Mammary epithelial cell (primary cell): ENCODE measurements at regions of chrX and their contacts with region 1.

Region 1: DNA sequence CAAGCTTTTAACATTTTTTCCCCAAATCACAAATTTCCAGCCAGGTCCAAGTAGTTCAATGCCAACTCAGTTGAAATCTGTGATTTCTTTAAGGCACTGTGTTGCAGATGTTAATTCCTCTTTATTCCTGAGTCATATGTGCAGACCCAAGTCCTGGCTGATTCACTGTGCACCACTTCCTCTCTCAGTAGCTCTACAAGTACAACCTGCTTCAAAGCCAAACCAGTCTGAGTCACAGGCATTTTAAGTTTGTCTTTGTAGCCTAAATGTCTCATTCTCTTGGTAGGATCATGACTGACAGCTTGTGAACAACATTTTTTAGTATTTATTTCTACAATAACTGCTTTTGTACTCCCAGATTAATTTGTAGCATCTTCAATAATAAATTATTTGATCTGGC is 165.6 kb upstream of the S100G start:
- DNase-seq: peak; percentile 96
- H3K4me3 ChIP-seq: no peak overlapping the region
- H3K27ac ChIP-seq: no peak overlapping the region
- H3K4me1 ChIP-seq: peaks cover 40% of the 10 kb centered on the region
- H3K27me3 ChIP-seq: no peaks in the 10 kb centered on the region
- CTCF ChIP-seq: no peak

Region 2: DNA sequence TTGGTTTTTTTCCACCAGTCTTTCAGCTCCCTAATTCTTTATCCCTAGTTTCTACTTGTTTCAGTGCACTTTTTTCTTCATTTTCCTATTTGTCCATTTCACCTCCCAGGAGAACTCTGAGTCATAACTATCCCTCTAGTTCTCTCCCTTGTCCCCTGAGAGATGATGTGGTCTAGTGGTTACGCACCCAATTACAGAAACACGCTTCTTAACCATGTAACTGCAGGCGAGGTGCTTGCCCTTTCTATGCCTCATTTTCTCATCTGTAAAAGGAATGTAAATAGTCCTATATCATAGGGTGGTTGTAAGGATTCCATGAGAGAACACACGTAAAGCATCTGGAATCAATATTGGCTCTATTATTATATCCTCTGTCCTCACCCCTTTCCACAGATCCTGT is 369.7 kb before region 1 on chrX:
- CTCF ChIA-PET with region 1: no interaction called
- dilution Hi-C with region 1: no loop called
- in situ Hi-C with region 1: no loop called
- intact Hi-C with region 1: no loop called
- DNase-seq: no peak
- H3K4me3 ChIP-seq: no peak overlapping the region
- H3K27ac ChIP-seq: no peak overlapping the region
- H3K4me1 ChIP-seq: no peaks in the 10 kb centered on the region
- H3K27me3 ChIP-seq: peaks cover 4% of the 10 kb centered on the region
- CTCF ChIP-seq: no peak

Region 3: DNA sequence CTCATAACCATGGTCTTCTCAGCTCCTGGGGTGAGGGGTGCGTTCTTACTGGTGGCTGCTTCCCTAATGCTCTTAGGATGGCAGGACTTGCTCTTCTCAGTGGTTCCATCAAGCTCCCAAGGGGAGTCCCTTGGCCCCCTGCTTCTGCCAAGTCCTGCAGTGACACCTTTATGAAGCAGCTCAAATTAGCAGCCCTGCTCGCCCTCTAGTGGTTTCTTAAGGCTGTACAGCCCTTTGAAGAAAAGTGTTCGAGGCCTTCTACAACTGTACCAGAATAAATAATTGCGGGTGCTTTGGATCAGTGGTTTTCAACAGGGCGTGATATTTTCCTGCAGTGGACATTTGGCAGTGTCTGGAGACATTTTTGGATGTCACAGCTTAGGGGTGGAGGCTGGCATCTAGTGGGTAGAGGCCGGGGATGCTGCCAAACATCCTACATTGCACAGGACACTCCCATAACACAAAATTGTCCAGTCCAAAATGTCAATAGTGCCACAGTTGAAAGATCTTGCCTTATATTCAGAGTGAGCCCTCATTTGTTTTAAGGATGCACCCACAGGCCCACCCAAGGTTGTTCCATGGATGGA is 39.1 kb before region 1 on chrX:
- CTCF ChIA-PET with region 1: no interaction called
- dilution Hi-C with region 1: no loop called
- in situ Hi-C with region 1: no loop called
- intact Hi-C with region 1: loop called (anchors 2 kb)
- DNase-seq: peak; percentile 20
- H3K4me3 ChIP-seq: no peak overlapping the region
- H3K27ac ChIP-seq: no peak overlapping the region
- H3K4me1 ChIP-seq: peaks cover 5% of the 10 kb centered on the region
- H3K27me3 ChIP-seq: no peaks in the 10 kb centered on the region
- CTCF ChIP-seq: peak; percentile 82 to 87

Region 4: GRCh38 chrX:16552546-16552945 is 68.2 kb after region 1 on chrX:
- CTCF ChIA-PET with region 1: no interaction called
- dilution Hi-C with region 1: no loop called
- in situ Hi-C with region 1: no loop called
- intact Hi-C with region 1: loop called (anchors 1 kb)
- DNase-seq: peak; percentile 89
- H3K4me3 ChIP-seq: no peak overlapping the region
- H3K27ac ChIP-seq: peak overlapping the region; percentile 50
- H3K4me1 ChIP-seq: peaks cover 10% of the 10 kb centered on the region
- H3K27me3 ChIP-seq: no peaks in the 10 kb centered on the region
- CTCF ChIP-seq: no peak